ENCODE measurements at regions of chr9 and their contacts with region 1.

Region 1: GRCh38 chr9:9399982-9400381 is 1212.8 kb downstream of the PTPRD start:
- DNase-seq: no peak
- ATAC-seq: no peak
- H3K4me3 Mint-ChIP-seq: no peak overlapping the region
- H3K27ac Mint-ChIP-seq: no peak overlapping the region
- H3K4me1 Mint-ChIP-seq: no peaks in the 10 kb centered on the region
- H3K27me3 Mint-ChIP-seq: no peaks in the 10 kb centered on the region

Region 2: GRCh38 chr9:9469271-9469670 is 69.3 kb after region 1 on chr9:
- CTCF ChIA-PET with region 1: no interaction called
- POLR2A ChIA-PET with region 1: no interaction called
- intact Hi-C with region 1: loop called in 1 of 2 experiments (anchors 10 kb)
- DNase-seq: no peak
- ATAC-seq: no peak
- H3K4me3 Mint-ChIP-seq: no peak overlapping the region
- H3K27ac Mint-ChIP-seq: no peak overlapping the region
- H3K4me1 Mint-ChIP-seq: no peaks in the 10 kb centered on the region
- H3K27me3 Mint-ChIP-seq: no peaks in the 10 kb centered on the region

Region 3: GRCh38 chr9:9483175-9483574 is 83.2 kb after region 1 on chr9:
- CTCF ChIA-PET with region 1: no interaction called
- POLR2A ChIA-PET with region 1: no interaction called
- intact Hi-C with region 1: no loop called
- DNase-seq: no peak
- ATAC-seq: no peak
- H3K4me3 Mint-ChIP-seq: no peak overlapping the region
- H3K27ac Mint-ChIP-seq: no peak overlapping the region
- H3K4me1 Mint-ChIP-seq: no peaks in the 10 kb centered on the region
- H3K27me3 Mint-ChIP-seq: no peaks in the 10 kb centered on the region

Region 4: DNA sequence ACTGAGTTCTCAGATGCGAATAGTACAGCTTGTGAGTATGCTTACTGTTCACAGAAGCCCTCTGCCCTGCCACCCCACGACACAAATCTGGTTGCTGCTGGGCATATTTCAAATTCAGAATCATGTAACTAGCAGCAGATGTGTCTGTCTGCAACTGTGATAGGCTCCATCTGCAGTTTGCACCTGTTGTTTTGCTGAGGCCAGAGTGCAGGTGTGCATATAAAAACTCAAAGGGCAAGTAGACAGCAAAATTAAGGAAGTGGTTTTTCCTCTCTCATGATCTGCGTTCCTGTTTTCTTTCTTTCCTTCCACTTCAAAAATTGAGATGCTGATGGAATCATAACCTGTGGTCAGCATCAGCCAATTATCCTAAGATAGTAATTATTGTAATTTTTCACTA is 212.3 kb after region 1 on chr9:
- CTCF ChIA-PET with region 1: no interaction called
- POLR2A ChIA-PET with region 1: no interaction called
- intact Hi-C with region 1: no loop called
- DNase-seq: no peak
- ATAC-seq: no peak
- H3K4me3 Mint-ChIP-seq: no peak overlapping the region
- H3K27ac Mint-ChIP-seq: no peak overlapping the region
- H3K4me1 Mint-ChIP-seq: peaks cover 7% of the 10 kb centered on the region
- H3K27me3 Mint-ChIP-seq: no peaks in the 10 kb centered on the region

Measured in activated CD4-positive, alpha-beta T cell treated with anti-CD3 and anti-CD28 coated beads for 36 hours (primary cell).